CD4-positive, alpha-beta memory T cell (primary cell): ENCODE measurements at regions of chr2 and their contacts with region 1.

Region 1: DNA sequence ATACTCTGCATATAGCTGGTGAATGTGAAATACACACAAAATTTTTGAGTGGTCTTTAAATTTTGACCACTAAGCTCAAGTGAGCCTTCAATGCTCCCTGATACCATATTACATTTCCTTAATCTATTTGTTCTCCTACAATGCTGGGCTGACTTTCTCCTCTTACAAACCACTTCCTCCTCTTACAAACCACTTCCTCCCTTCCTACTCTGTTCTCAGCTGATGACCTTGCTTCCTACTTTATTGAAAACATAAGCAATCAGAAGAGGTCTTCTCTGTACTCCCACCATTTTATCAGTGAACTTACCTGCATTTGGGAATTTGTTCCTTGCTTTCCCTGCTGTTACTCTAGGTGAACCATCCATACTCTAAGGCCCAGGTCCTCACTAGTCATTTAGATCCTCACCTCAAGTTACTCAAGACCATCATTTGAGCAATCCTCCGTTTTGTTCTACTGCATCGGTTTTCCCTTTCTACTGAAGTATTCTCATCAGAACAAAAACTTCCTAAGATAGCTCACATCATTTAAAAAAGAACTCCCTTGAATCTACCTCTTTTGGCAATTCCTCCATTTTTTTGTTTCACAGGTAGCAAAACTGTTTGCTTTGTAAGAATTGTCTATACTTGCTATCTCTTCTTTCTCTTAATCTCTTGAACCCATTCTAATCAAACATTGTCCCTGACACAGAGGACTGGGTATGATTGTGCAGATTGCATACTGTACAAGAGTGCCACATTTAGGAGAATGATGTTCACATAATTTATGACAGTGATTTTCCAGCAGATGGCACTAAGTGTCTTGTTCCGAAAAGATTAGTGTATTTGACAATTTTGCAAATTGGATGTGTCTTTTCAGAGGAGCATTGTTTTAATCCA is 96.5 kb downstream of the EPB41L5 start:
- DNase-seq: peak in 4 of 5 donors; percentile 49 to 64 (median 56)
- H3K4me3 ChIP-seq: peak overlapping the region in 1 of 2 donors; percentile 25
- H3K4me3 Mint-ChIP-seq: peak overlapping the region; percentile 49 to 89 (median 80)
- H3K27ac ChIP-seq: peak overlapping the region; percentile 23
- H3K27ac Mint-ChIP-seq: peak overlapping the region in 6 of 7 donors; percentile 45 to 91 (median 64)
- H3K4me1 ChIP-seq: peaks cover 23% of the 10 kb centered on the region
- H3K4me1 Mint-ChIP-seq: peaks cover 18 to 24% (median 21%) of the 10 kb centered on the region in 4 donors
- H3K27me3 ChIP-seq: no peaks in the 10 kb centered on the region
- H3K27me3 Mint-ChIP-seq: peaks cover 0 to 1% of the 10 kb centered on the region in 2 donors

Region 2: DNA sequence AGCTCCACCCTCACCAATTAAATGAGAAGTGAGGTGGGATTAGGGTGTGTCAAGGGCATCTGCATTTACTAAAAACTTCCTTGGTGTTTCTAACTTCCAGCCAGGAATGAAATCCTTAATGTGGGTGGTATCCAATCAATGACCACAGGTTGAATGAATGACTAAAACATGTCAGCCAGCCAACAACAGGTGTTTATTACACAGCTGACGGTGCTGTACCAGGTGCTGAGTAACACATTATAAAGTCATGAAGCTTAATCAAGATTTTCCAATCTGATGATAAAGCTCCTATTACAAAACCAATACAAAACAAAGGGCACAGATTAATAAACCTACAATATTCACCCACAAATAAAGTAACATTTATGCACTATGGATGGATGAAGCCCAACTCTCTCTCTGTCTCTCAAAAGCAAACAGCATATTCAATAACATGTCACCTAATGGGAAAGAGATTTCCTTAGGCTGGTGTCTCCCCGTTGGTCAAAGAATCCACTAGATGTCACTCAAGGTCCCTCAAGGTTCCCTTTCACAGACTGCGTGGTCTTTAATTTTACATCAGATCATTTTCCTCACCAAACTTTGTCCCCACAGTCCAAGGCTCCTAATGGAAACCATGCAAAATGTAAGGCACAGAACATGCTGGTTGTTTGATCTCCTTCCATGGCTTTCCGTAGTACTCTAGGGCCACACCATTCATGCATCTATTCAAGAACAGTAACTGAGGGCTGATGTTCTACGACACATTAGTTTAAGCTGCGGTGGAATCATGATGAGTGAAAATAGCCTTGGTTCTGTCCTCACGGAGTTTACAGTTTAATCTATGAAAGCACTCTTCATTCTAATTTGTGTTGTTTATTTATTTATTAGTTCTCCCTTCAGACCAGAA is 356.1 kb before region 1 on chr2:
- CTCF ChIA-PET with region 1: interaction called, 10 read pairs
- POLR2A ChIA-PET with region 1: no interaction called
- intact Hi-C with region 1: loop called (anchors 2 kb)
- DNase-seq: peak in 4 of 5 donors; percentile 47 to 58 (median 56)
- H3K4me3 ChIP-seq: no peak overlapping the region
- H3K4me3 Mint-ChIP-seq: no peak overlapping the region
- H3K27ac ChIP-seq: no peak overlapping the region
- H3K27ac Mint-ChIP-seq: no peak overlapping the region
- H3K4me1 ChIP-seq: no peaks in the 10 kb centered on the region
- H3K4me1 Mint-ChIP-seq: peaks cover under 1 to 5% (median 4%) of the 10 kb centered on the region in 4 donors
- H3K27me3 ChIP-seq: no peaks in the 10 kb centered on the region
- H3K27me3 Mint-ChIP-seq: no peaks in the 10 kb centered on the region

Region 3: DNA sequence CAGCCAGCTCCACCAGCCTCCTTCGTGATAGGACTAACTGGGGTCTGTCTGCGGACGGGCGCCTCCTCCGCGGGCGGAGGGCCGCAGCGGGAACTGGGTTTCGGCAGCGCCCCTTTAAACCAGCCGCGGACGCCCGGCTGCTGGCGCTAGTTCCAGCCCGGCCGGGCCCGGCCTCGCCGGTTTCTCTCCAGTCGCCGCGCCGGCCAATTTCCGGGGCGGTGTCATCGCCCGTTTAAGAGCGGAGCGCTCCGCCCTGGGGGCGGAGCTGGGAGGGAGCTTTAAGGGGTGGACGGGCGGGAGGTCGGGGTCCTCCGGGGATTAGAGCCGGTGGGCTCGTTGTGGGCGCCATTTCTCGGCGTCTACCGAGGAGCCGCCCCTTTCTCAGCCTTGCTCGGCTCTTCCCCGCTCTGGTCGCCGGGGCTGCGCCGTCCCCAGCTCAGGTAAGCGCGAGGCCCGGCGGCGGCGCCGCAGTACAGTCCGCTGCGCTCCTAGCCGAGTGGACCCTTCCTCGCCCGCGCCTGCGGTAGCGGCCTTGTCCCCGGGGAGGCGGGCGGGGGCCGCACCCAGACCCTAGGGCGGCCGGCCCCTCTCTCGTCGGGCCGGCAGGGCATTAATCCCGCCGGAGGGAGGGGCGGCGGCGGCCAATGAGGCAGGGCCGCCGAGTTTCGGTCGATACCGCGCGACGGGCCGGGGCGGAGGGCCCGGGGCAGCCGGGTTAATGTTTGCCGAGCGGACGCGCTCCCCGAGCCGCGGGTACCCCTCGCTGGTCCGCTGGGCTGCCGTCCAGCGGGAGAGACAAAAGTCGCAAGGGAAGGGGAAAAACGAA is 96.4 kb before region 1 on chr2 and contains the start of gene EPB41L5:
- CTCF ChIA-PET with region 1: interaction called, 6 read pairs
- POLR2A ChIA-PET with region 1: interaction called, 4 read pairs
- intact Hi-C with region 1: loop called (anchors 1 kb)
- DNase-seq: peak; percentile 63 to 74 (median 67)
- H3K4me3 ChIP-seq: peak within 1 kb of the TSS; percentile 52 to 76
- H3K4me3 Mint-ChIP-seq: peak within 1 kb of the TSS; percentile 82 to 87 (median 84)
- H3K27ac ChIP-seq: peak within 1 kb of the TSS; percentile 55
- H3K27ac Mint-ChIP-seq: peak within 1 kb of the TSS; percentile 0 to 86 (median 70)
- H3K4me1 ChIP-seq: peaks cover 15% of the 10 kb centered on the region
- H3K4me1 Mint-ChIP-seq: peaks cover 13 to 20% (median 15%) of the 10 kb centered on the region in 4 donors
- H3K27me3 ChIP-seq: no peaks in the 10 kb centered on the region
- H3K27me3 Mint-ChIP-seq: peaks cover 0 to 2% of the 10 kb centered on the region in 2 donors
- total RNA-seq, gene EPB41L5: 5.3 to 6.2 TPM

Region 4: DNA sequence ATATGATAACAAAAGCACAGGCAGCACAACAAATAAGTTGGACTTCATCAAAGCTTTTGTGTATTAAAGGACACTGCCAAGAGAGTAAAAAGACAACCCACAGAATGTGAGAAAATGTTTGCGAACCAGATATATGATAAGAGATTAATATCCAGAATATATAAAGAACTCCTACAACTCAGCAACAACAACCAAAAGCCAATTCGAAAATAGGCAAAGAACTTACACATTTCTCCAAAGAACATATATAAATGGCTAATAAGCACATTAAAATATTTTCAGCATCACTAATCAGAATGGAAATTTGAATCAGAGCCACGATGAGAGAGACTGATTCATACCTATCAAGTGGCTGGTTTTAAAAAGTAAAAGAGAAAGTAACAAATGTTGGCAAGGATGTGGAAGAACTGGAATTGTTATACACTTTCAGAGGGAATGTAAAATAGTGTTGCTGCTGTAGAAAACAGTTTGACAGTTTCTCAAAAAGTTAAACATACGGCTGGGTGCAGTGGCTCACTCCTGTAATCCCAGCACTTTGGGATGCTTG is 71.4 kb before region 1 on chr2:
- CTCF ChIA-PET with region 1: no interaction called
- POLR2A ChIA-PET with region 1: no interaction called
- intact Hi-C with region 1: no loop called
- DNase-seq: no peak
- H3K4me3 ChIP-seq: no peak overlapping the region
- H3K4me3 Mint-ChIP-seq: no peak overlapping the region
- H3K27ac ChIP-seq: no peak overlapping the region
- H3K27ac Mint-ChIP-seq: no peak overlapping the region
- H3K4me1 ChIP-seq: no peaks in the 10 kb centered on the region
- H3K4me1 Mint-ChIP-seq: peaks cover 0 to 3% (median under 1%) of the 10 kb centered on the region in 4 donors
- H3K27me3 ChIP-seq: no peaks in the 10 kb centered on the region
- H3K27me3 Mint-ChIP-seq: no peaks in the 10 kb centered on the region